CD4-positive, alpha-beta T cell (primary cell): ENCODE measurements at regions of chr14 and their contacts with region 1.

Region 1: DNA sequence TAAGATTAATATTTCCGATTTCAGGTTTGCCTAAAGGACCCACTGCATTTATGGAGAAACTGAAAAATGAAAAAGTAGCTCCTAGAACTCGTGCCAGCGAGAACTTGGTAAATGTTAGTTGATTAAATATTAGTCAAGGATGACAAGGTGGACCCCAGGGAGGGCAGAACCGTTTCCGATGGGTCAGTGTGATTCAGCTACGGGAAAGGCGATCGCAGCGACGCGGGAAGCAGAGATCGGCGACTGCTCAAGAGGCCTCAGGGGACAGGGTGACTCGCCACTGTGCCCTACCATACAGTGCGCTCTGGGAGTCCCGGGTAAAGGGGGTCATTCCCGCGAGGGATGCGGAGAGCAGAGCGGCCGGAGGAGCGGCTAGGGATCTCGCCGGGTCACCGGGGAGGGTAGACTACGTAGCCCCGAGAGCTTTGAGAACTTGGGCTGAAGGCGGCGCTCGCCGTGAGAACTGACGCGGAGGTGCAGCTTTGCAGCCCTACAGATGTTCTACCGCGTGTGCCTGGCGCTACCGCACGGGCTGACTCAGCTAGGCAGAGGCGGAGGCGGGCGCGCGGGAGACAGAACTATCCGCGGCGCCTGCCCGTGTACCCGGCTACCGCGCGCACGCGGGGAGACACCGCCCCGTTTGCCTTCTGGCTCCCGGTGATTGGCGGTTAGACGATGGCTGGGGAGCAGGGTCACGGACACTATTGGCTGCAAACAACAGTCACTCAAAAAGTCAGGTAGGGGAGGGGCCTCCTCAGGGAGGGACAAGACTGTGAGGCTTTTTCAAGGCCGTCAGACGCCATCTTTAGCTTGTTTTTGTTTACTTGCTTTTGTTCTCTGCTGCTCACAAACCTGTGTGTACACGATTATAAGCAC is 3.2 kb downstream of the C14orf93 start:
- DNase-seq: peak; percentile 92 to 99 (median 96)
- ATAC-seq: peak; percentile 94
- H3K4me3 ChIP-seq: peak overlapping the region; percentile 80
- H3K4me3 Mint-ChIP-seq: peak overlapping the region; percentile 95
- H3K27ac ChIP-seq: peak overlapping the region; percentile 83 to 84
- H3K27ac Mint-ChIP-seq: peak overlapping the region; percentile 93
- H3K4me1 ChIP-seq: peaks cover 26% of the 10 kb centered on the region
- H3K4me1 Mint-ChIP-seq: peaks cover 52% of the 10 kb centered on the region
- H3K27me3 ChIP-seq: no peaks in the 10 kb centered on the region
- H3K27me3 Mint-ChIP-seq: no peaks in the 10 kb centered on the region
- CTCF ChIP-seq: peak; percentile 60

Region 2: DNA sequence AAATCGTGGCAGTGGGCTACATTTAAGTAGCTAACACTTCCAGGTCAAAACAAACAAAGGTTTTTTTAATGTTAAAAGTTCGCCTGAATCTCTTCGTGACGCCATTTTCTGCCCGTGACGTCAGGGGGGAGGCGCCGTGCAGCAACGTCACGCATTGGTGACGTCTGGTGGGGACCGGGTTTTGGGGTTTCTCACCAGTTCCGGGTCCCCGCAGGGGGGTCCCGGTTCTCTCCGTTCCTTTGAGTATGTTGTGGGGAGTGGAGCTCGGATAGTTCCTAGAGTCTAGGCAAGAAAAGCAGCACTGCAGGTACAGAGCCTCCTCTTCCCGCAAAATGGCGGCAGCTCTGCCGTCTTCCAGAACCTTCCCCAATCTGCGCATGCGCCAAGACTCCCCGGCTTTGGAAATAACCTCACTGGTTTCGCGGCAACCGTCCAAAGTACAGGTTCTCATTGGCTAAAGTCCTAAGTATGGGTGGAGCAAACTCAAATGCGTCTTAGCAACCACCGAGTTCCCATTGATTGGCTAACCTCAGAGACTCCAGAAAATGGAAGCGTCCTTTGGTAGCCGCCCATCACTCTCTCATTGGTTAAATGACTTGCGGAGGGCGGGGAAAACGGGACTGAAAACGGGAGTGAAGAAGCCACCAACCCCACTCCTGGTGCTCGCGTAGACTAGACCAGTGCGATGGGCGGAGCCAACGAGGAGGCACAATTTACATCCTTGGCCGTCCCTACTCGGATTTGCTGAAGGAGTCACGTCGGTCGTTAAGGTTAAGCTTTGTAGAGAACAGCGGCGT is 87.8 kb before region 1 on chr14 and contains the start of gene RBM23:
- CTCF ChIA-PET with region 1: no interaction called
- POLR2A ChIA-PET with region 1: interaction called, 15 read pairs
- intact Hi-C with region 1: no loop called
- DNase-seq: peak; percentile 99 to 100 (median 100)
- ATAC-seq: peak; percentile 84
- H3K4me3 ChIP-seq: peak within 1 kb of the TSS; percentile 74
- H3K4me3 Mint-ChIP-seq: peak within 1 kb of the TSS; percentile 88
- H3K27ac ChIP-seq: peak within 1 kb of the TSS; percentile 99 to 100
- H3K27ac Mint-ChIP-seq: peak within 1 kb of the TSS; percentile 100
- H3K4me1 ChIP-seq: peaks cover 38% of the 10 kb centered on the region
- H3K4me1 Mint-ChIP-seq: peaks cover 50% of the 10 kb centered on the region
- H3K27me3 ChIP-seq: no peaks in the 10 kb centered on the region
- H3K27me3 Mint-ChIP-seq: peaks cover 4% of the 10 kb centered on the region
- CTCF ChIP-seq: no peak
- total RNA-seq, gene RBM23: 87.9 to 111 TPM

Region 3: GRCh38 chr14:22955702-22956569 is 50.8 kb before region 1 on chr14:
- CTCF ChIA-PET with region 1: interaction called, 4 read pairs
- POLR2A ChIA-PET with region 1: interaction called, 12 read pairs
- intact Hi-C with region 1: no loop called
- DNase-seq: no peak
- ATAC-seq: no peak
- H3K4me3 ChIP-seq: peak overlapping the region; percentile 89
- H3K4me3 Mint-ChIP-seq: peak overlapping the region; percentile 92
- H3K27ac ChIP-seq: peak overlapping the region; percentile 63 to 83
- H3K27ac Mint-ChIP-seq: peak overlapping the region; percentile 83
- H3K4me1 ChIP-seq: peaks cover 21% of the 10 kb centered on the region
- H3K4me1 Mint-ChIP-seq: peaks cover 18% of the 10 kb centered on the region
- H3K27me3 ChIP-seq: no peaks in the 10 kb centered on the region
- H3K27me3 Mint-ChIP-seq: no peaks in the 10 kb centered on the region
- CTCF ChIP-seq: no peak

Region 4: DNA sequence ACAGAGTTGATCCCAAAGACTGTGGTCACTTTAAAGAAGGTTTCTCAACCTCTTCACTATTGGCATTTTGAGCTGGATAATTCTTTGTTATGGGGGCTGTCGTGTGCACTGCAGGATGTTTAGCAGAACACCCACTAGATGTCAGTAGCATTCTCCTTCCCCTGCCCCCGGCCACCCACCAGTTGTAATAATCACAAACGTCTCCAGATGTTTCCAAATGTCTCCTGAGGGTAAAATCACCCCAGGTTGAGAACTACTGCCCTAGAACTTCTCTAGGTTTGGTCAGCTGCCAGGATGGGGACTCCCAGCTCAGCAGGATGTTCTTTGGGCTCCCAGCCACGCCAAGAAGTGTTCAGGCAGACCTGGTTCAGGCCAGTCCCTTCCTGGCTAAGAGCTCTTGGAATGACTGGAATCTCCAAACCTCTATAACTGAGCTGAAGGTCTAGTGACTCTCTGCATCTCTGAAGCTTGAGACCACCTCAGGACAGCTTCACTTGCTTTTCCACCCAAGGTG is 12.0 kb before region 1 on chr14:
- CTCF ChIA-PET with region 1: interaction called, 19 read pairs
- POLR2A ChIA-PET with region 1: interaction called, 13 read pairs
- intact Hi-C with region 1: no loop called
- DNase-seq: peak in 8 of 14 experiments; percentile 11 to 66 (median 38)
- ATAC-seq: peak; percentile 80
- H3K4me3 ChIP-seq: no peak overlapping the region
- H3K4me3 Mint-ChIP-seq: no peak overlapping the region
- H3K27ac ChIP-seq: no peak overlapping the region
- H3K27ac Mint-ChIP-seq: no peak overlapping the region
- H3K4me1 ChIP-seq: no peaks in the 10 kb centered on the region
- H3K4me1 Mint-ChIP-seq: no peaks in the 10 kb centered on the region
- H3K27me3 ChIP-seq: no peaks in the 10 kb centered on the region
- H3K27me3 Mint-ChIP-seq: no peaks in the 10 kb centered on the region
- CTCF ChIP-seq: peak; percentile 59

Region 5: GRCh38 chr14:23034483-23035302 is 27.9 kb after region 1 on chr14 and contains the start of gene PSMB5:
- CTCF ChIA-PET with region 1: interaction called, 16 read pairs
- POLR2A ChIA-PET with region 1: interaction called, 65 read pairs
- intact Hi-C with region 1: loop called (anchors 1 kb)
- DNase-seq: peak; percentile 76 to 97 (median 80)
- ATAC-seq: peak; percentile 89
- H3K4me3 ChIP-seq: peak within 1 kb of the TSS; percentile 59
- H3K4me3 Mint-ChIP-seq: peak within 1 kb of the TSS; percentile 90
- H3K27ac ChIP-seq: peak within 1 kb of the TSS; percentile 75 to 94
- H3K27ac Mint-ChIP-seq: peak within 1 kb of the TSS; percentile 92
- H3K4me1 ChIP-seq: peaks cover 16% of the 10 kb centered on the region
- H3K4me1 Mint-ChIP-seq: peaks cover 36% of the 10 kb centered on the region
- H3K27me3 ChIP-seq: no peaks in the 10 kb centered on the region
- H3K27me3 Mint-ChIP-seq: no peaks in the 10 kb centered on the region
- CTCF ChIP-seq: no peak
- total RNA-seq, gene PSMB5: 20.1 to 24.5 TPM

Region 6: GRCh38 chr14:23045419-23046357 is 38.9 kb after region 1 on chr14:
- CTCF ChIA-PET with region 1: no interaction called
- POLR2A ChIA-PET with region 1: no interaction called
- intact Hi-C with region 1: no loop called
- DNase-seq: no peak
- ATAC-seq: no peak
- H3K4me3 ChIP-seq: no peak overlapping the region
- H3K4me3 Mint-ChIP-seq: no peak overlapping the region
- H3K27ac ChIP-seq: no peak overlapping the region
- H3K27ac Mint-ChIP-seq: no peak overlapping the region
- H3K4me1 ChIP-seq: no peaks in the 10 kb centered on the region
- H3K4me1 Mint-ChIP-seq: no peaks in the 10 kb centered on the region
- H3K27me3 ChIP-seq: no peaks in the 10 kb centered on the region
- H3K27me3 Mint-ChIP-seq: no peaks in the 10 kb centered on the region
- CTCF ChIP-seq: no peak

Region 7: DNA sequence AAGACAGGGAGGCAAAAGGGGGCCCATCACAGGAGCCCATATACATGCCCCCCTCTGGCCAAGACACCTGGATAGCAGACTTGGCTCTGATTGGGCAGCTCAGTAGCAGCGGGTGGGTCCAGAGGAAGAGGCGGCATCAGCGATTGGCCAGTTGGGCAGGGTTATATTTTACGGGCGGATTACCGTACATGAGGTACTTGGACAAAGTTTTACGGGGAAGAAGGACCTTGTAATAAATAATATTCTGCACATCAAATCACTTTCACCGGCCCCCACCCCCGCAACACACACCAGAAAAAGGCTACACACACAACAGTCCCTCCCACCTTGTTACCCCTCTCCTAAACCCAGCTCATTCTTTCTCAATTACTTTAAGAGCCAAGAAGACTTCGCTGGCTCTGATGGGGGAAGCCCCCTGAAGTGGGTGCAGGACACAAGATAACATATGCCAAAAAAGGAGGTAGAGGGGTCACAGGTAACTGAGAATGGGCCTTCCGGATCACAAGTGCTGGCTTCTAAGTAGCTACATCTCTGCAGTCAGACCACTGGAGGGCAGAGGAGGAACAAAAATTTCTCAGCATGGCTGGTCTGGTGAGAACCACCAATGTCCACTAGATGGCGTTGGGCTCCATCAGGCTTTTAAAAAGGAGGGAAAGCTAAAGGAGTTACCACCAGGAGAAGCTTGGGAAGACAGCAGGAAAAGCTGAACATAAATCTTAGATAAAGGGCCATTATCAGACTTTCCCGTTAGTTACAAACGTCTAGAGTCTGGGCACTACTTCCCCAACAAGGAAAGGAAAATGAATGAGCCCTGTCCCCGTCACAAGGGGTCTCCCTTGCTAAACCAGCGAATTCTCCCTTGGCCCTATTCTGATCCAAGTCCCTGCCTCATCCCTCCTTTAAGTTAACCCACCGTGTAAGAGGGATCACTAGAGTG is 62.0 kb after region 1 on chr14:
- CTCF ChIA-PET with region 1: interaction called, 19 read pairs
- POLR2A ChIA-PET with region 1: interaction called, 6 read pairs
- intact Hi-C with region 1: no loop called
- DNase-seq: peak; percentile 54 to 90 (median 65)
- ATAC-seq: peak; percentile 73
- H3K4me3 ChIP-seq: no peak overlapping the region
- H3K4me3 Mint-ChIP-seq: peak overlapping the region; percentile 78
- H3K27ac ChIP-seq: no peak overlapping the region
- H3K27ac Mint-ChIP-seq: peak overlapping the region; percentile 63
- H3K4me1 ChIP-seq: peaks cover 36% of the 10 kb centered on the region
- H3K4me1 Mint-ChIP-seq: peaks cover 49% of the 10 kb centered on the region
- H3K27me3 ChIP-seq: no peaks in the 10 kb centered on the region
- H3K27me3 Mint-ChIP-seq: no peaks in the 10 kb centered on the region
- CTCF ChIP-seq: peak; percentile 97